Mammary epithelial cell (primary cell): ENCODE measurements at regions of chr12 and their contacts with region 1.

Region 1: GRCh38 chr12:88141770-88142609 is at the starts of genes CEP290 and TMTC3:
- DNase-seq: peak; percentile 100
- H3K4me3 ChIP-seq: peak within 1 kb of the TSS; percentile 80 to 82 (median 82)
- H3K27ac ChIP-seq: peak within 1 kb of the TSS; percentile 90
- H3K4me1 ChIP-seq: peaks cover 31% of the 10 kb centered on the region
- H3K27me3 ChIP-seq: no peaks in the 10 kb centered on the region
- CTCF ChIP-seq: no peak
- total RNA-seq, gene CEP290: 20.0 to 20.5 TPM
- total RNA-seq, gene TMTC3: 46.3 to 97.0 TPM

Region 2: DNA sequence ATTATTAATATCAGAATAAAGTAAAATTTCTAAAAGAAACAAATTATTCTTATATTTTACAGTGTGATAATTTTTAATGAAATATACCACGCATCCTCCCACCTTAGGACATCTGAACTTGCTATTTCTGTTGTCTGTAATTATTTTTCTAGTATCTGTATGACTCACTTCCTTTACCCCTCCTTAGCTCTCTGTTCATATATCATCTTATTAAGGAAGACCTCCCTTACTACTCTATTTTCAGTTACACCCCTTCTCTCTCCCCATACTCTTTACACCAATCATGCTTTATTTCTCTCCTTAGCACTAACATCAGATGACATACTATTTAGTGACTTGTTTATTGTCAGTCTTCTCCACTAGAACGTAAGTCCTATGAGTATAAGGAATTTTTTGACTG is 78.6 kb before region 1 on chr12:
- CTCF ChIA-PET with region 1: no interaction called
- dilution Hi-C with region 1: no loop called
- in situ Hi-C with region 1: no loop called
- intact Hi-C with region 1: no loop called
- DNase-seq: peak; percentile 14
- H3K4me3 ChIP-seq: no peak overlapping the region
- H3K27ac ChIP-seq: peak overlapping the region; percentile 15
- H3K4me1 ChIP-seq: peaks cover 6% of the 10 kb centered on the region
- H3K27me3 ChIP-seq: no peaks in the 10 kb centered on the region
- CTCF ChIP-seq: no peak

Region 3: DNA sequence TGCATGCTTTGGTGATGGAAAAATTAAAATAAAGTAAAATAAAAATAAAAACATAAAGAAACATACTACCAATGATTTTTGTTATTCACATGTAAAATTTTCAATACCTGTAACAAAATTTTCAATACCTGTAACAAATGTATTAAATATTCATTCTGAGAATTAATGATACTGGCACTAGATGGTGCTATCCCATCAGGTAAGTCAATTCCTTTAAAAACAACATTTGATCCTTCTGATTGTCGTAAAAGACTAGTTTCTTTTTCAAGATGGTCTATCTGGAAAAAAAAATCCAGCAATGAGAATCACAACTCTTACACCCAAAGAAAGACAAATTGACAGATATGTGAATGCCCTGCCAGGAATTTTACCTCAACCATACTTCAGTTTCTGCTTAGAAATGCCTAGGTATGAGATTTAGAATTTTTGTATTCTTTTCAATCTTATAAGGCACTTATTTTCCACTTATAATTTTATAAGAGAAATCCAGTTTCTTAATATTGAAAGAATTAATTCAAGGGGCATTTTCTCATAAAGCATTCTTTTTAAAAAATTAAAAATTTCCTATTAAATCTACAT is 30.8 kb before region 1 on chr12:
- CTCF ChIA-PET with region 1: no interaction called
- dilution Hi-C with region 1: no loop called
- in situ Hi-C with region 1: no loop called
- intact Hi-C with region 1: loop called (anchors 1 kb)
- DNase-seq: peak; percentile 48
- H3K4me3 ChIP-seq: peak overlapping the region in 2 of 3 experiments; percentile 36 to 44
- H3K27ac ChIP-seq: peak overlapping the region; percentile 57
- H3K4me1 ChIP-seq: peaks cover 4% of the 10 kb centered on the region
- H3K27me3 ChIP-seq: no peaks in the 10 kb centered on the region
- CTCF ChIP-seq: peak; percentile 49 to 51

Region 4: DNA sequence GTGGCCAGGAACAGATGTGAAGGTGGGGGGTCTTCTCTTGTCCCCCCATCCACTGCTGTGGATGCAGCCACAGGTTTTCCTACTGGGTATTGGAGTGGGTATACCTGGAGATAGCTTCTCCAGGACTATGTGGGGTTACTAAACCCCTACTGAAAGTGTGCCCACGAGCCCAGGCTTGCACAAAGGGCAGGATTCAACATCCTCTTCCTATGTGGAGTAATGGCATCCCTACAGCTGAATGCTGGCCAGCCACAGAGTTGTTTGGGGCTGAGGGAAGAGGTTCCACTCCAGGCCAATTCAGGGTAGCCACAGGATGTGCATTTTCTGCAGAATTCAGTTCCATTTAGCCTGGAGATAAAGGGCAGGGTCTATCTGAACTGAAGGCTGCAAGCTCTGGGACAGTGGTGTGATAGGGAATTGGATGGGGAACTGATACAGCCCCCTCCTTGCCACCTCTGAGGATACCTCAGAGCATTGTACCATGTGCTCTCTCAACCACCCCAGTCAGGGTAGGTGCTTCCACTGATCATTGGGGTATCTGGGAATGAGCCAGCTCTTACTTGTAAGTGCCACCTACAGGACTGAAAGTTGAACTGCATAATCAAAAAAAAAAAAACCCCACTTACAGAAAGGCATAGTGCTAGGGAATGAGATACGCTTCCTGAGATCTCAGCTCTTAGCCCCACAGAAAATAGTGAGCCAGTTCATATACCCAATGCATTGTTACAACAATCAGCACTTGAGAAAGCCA is 251.2 kb after region 1 on chr12:
- CTCF ChIA-PET with region 1: no interaction called
- dilution Hi-C with region 1: no loop called
- in situ Hi-C with region 1: no loop called
- intact Hi-C with region 1: loop called (anchors 5 kb)
- DNase-seq: peak; percentile 56
- H3K4me3 ChIP-seq: no peak overlapping the region
- H3K27ac ChIP-seq: no peak overlapping the region
- H3K4me1 ChIP-seq: peaks cover 10% of the 10 kb centered on the region
- H3K27me3 ChIP-seq: no peaks in the 10 kb centered on the region
- CTCF ChIP-seq: peak; percentile 55 to 56

Region 5: GRCh38 chr12:88519802-88520435 is 377.9 kb after region 1 on chr12:
- CTCF ChIA-PET with region 1: no interaction called
- dilution Hi-C with region 1: no loop called
- in situ Hi-C with region 1: loop called in 1 of 2 experiments (anchors 10 kb)
- intact Hi-C with region 1: no loop called
- DNase-seq: peak; percentile 70
- H3K4me3 ChIP-seq: peak overlapping the region in 1 of 3 experiments; percentile 12
- H3K27ac ChIP-seq: peak overlapping the region; percentile 83
- H3K4me1 ChIP-seq: peaks cover 13% of the 10 kb centered on the region
- H3K27me3 ChIP-seq: no peaks in the 10 kb centered on the region
- CTCF ChIP-seq: no peak

Region 6: DNA sequence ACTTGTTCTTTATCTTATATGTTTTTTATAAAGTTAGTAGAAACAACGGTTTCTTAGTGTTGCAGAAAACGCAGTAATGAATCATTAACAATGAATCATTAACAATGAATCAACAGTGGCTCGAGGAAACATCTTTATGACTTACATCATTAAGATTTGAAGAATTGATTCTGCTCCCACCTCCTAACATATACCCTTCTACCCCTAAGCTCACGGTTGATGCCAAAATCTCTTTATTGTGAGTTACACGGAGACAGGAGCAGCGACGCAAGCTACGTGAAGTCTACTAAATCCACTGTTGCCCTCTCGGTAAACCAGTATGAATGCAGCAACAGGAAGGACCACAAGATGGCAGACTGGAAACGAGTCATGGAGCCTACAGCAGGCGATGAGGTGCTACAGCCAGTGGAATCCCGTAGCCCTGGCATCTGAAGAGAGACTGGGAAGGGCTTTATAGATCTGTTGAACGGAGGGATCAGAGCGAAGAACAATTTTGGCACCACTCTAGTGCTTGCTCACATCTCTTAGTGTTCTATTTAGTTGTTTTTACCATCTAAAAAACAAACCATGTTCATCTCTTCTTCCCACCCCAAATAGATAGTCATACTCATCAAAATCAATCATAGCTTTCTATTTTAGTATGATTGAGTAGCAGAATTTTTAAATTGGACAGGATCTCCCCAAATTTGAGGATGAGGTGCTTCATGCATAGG is 877.6 kb after region 1 on chr12:
- CTCF ChIA-PET with region 1: no interaction called
- dilution Hi-C with region 1: no loop called
- in situ Hi-C with region 1: loop called in 1 of 2 experiments (anchors 25 kb)
- intact Hi-C with region 1: no loop called
- DNase-seq: peak; percentile 81
- H3K4me3 ChIP-seq: peak overlapping the region; percentile 18 to 49 (median 36)
- H3K27ac ChIP-seq: peak overlapping the region; percentile 57
- H3K4me1 ChIP-seq: peaks cover 16% of the 10 kb centered on the region
- H3K27me3 ChIP-seq: no peaks in the 10 kb centered on the region
- CTCF ChIP-seq: peak; percentile 92 to 93